Calu3 (cell line): ENCODE measurements at regions of chr1 and their contacts with region 1.

Region 1: DNA sequence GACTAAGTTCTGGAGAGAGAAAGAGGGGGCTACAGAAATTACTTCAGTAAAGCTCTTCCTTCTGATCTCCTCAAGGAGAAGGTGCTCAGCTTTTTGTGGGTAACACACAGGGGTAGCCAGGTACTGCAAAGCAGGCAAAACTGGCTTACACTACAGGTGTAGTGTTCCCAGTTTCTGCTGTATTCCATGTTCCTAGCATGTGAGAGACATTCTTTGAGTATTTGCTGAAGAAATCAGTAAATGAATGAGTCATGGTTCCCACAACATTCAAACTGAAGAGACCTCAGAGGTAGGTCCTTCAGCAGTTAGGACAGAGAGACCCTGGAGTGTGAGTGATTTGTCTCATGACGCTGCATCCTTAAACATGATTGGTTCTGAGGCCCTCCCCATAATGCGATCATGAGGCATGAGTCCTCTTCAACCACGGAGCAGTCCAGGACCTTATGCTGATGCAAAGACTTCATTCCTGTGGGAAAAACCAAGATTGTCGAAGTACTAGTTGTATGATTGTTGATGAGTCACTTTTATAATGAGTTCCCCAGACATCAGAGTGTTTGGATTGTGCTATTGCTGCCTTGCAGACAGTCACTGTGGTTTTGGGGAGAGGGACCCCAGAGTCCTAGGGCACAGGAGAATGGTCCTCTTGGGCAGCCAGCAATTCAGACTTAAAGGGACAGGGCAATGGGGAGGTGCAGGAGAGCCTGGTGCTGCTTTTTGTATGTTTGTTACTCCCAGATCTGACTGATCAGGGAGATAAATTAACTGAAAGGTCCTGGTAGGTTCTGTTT is 2.7 kb upstream of the OR10J4 start:
- DNase-seq: no peak
- H3K4me3 Mint-ChIP-seq: no peak overlapping the region
- H3K27ac Mint-ChIP-seq: no peak overlapping the region
- H3K4me1 Mint-ChIP-seq: no peaks in the 10 kb centered on the region
- H3K27me3 Mint-ChIP-seq: no peaks in the 10 kb centered on the region
- CTCF ChIP-seq: no peak

Region 2: GRCh38 chr1:159122005-159122621 is 307.2 kb before region 1 on chr1:
- CTCF ChIA-PET with region 1: no interaction called
- intact Hi-C with region 1: no loop called
- DNase-seq: no peak
- H3K4me3 Mint-ChIP-seq: no peak overlapping the region
- H3K27ac Mint-ChIP-seq: no peak overlapping the region
- H3K4me1 Mint-ChIP-seq: no peaks in the 10 kb centered on the region
- H3K27me3 Mint-ChIP-seq: peaks cover 68% of the 10 kb centered on the region
- CTCF ChIP-seq: no peak

Region 3: DNA sequence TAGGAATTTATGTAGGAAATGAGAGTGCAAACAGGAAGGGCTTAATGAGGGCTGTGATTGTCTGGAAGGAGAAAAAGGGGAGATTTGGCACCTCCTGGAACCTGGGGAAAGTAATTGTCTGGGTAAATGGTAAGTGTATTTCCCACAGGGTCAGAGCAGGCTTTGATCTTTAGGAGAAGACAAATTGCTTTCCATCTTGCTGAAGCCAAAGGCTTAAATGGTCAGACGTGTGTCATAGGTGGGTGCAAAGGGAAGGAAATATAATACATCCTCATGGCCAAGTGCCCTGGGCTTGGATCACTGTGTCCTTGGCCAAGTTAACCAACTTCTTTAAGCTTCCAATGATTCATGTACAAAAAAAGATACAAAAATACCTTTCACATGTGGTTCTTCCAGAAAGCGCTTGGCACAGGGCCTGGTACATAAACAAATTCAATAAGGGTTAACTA is 350.2 kb after region 1 on chr1:
- CTCF ChIA-PET with region 1: no interaction called
- intact Hi-C with region 1: loop called (anchors 5 kb)
- DNase-seq: no peak
- H3K4me3 Mint-ChIP-seq: no peak overlapping the region
- H3K27ac Mint-ChIP-seq: peak overlapping the region; percentile 12
- H3K4me1 Mint-ChIP-seq: peaks cover 6% of the 10 kb centered on the region
- H3K27me3 Mint-ChIP-seq: peaks cover 21% of the 10 kb centered on the region
- CTCF ChIP-seq: no peak